HEK293 (cell line): ENCODE measurements at regions of chr15 and their contacts with region 1.

Region 1: GRCh38 chr15:85840065-85840801 is 45.5 kb upstream of the KLHL25 start:
- H3K4me3 ChIP-seq: peak overlapping the region; percentile 26
- H3K27ac ChIP-seq: no peak overlapping the region
- H3K4me1 ChIP-seq: no peaks in the 10 kb centered on the region
- CTCF ChIP-seq: peak; percentile 95

Region 2: GRCh38 chr15:85730001-85730820 is 110.0 kb before region 1 on chr15:
- CTCF ChIA-PET with region 1: interaction called, 30 read pairs
- POLR2A ChIA-PET with region 1: interaction called, 7 read pairs
- H3K4me3 ChIP-seq: no peak overlapping the region
- H3K27ac ChIP-seq: no peak overlapping the region
- H3K4me1 ChIP-seq: no peaks in the 10 kb centered on the region
- CTCF ChIP-seq: peak; percentile 62

Region 3: GRCh38 chr15:85742186-85742821 is 97.9 kb before region 1 on chr15:
- CTCF ChIA-PET with region 1: interaction called, 16 read pairs
- POLR2A ChIA-PET with region 1: no interaction called
- H3K4me3 ChIP-seq: no peak overlapping the region
- H3K27ac ChIP-seq: no peak overlapping the region
- H3K4me1 ChIP-seq: no peaks in the 10 kb centered on the region
- CTCF ChIP-seq: no peak

Region 4: DNA sequence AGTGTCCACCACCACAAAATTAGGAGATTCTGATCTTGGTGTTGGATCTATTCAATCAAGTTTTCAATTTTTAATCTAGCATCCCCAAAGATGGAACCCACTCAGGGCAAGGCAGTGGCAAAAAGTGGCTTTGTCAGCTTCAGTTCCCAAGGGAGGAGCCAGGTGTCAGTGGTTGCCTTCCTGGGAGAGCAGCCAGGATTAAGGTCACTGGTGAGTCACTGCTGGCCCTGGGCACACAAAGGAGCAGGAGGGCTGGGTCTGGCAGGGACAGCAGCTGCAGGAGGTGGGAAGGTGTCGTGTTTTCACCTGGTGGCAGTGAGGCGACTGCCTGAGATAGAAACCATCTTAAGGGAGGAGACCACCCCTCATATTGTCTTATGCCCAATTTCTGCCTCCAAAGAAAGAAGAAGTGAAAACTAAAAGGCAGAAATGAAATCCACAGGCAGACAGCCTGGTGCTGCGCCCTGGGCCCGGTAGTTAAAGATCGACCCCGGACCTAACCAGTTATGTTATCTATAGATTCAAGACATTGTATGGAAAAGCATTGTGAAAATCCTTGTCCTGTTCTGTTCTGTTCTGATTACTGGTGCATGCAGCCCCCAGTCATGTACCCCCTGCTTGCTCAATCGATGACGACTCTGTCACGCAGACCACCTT is 39.6 kb before region 1 on chr15:
- CTCF ChIA-PET with region 1: interaction called, 13 read pairs
- POLR2A ChIA-PET with region 1: no interaction called
- H3K4me3 ChIP-seq: no peak overlapping the region
- H3K27ac ChIP-seq: no peak overlapping the region
- H3K4me1 ChIP-seq: peaks cover 6% of the 10 kb centered on the region; the same call in 1 of the 2 replicates
- CTCF ChIP-seq: 0 out of 2 replicates have a peak, but pooled peaks have one; percentile 37

Region 5: DNA sequence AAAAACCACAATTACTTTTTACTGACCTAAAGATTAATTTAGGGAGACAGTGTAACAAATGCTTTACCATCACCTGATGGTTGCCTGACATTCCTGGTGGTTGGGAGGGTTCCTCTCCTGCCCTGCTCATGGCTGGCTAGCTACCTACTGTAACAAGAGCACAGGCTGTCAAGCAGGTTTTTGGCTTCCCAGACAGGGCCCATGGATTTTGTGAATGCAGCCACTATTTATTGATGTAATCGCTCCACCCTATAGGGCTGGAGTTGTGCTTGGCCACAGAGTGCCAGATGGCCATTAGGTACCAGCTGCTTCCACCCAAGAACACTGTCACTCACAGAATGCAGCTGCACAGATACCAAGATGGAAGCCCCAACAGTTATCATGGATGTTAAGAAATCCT is 14.5 kb before region 1 on chr15:
- CTCF ChIA-PET with region 1: interaction called, 17 read pairs
- POLR2A ChIA-PET with region 1: no interaction called
- H3K4me3 ChIP-seq: no peak overlapping the region
- H3K27ac ChIP-seq: no peak overlapping the region
- H3K4me1 ChIP-seq: no peaks in the 10 kb centered on the region
- CTCF ChIP-seq: no peak